Prostate gland (tissue), 2 donors: ENCODE measurements at regions of chr14 and their contacts with region 1.

Region 1: GRCh38 chr14:65095619-65096205 is 6.6 kb downstream of the MAX start:
- DNase-seq: peak; percentile 88
- H3K4me3 ChIP-seq: no peak overlapping the region
- H3K27ac ChIP-seq: peak overlapping the region; percentile 66 to 71
- H3K4me1 ChIP-seq: peaks cover 24% of the 10 kb centered on the region
- H3K27me3 ChIP-seq: no peaks in the 10 kb centered on the region
- CTCF ChIP-seq: no peak
- POLR2A ChIP-seq: no peak

Region 2: DNA sequence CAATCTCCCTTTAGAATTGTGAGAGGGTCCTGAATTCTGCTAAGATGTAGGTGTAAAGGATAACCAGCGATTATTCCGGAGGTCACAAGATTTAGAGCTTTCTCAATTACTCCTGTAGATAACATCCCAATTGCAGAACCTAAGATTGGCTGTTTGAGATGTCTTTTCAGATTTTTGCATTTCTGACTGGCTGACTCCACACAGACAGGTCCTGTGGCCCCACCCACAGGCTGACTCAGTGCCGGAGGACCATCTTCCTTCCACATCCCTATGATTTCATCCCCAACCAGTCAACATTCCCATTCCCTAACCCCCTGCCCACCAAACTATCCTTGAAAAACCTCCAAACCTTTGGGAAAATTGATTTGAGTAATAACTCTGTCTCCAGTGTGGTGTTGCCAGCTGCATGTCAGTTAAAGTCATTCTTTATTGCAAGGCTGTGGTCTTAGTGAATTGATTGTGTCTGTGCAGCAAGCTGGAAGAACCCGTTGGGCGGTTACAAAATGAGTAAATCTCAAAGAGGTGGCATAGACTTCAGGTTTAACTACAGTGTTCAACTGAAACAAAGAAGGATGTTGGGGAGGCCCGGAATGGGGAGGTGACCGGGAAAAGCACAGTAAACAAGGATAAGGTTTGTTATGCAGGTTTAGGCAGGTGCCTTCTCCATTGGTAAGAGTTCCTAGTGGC is 98.5 kb before region 1 on chr14:
- intact Hi-C with region 1: no loop called
- DNase-seq: peak; percentile 73
- H3K4me3 ChIP-seq: no peak overlapping the region
- H3K27ac ChIP-seq: peak overlapping the region; percentile 9 to 33
- H3K4me1 ChIP-seq: peaks cover 2% of the 10 kb centered on the region
- H3K27me3 ChIP-seq: no peaks in the 10 kb centered on the region
- CTCF ChIP-seq: no peak
- POLR2A ChIP-seq: no peak

Region 3: GRCh38 chr14:65080960-65081747 is 14.6 kb before region 1 on chr14:
- intact Hi-C with region 1: loop called (anchors 2 kb)
- DNase-seq: no peak
- H3K4me3 ChIP-seq: no peak overlapping the region
- H3K27ac ChIP-seq: peak overlapping the region; percentile 68 to 79
- H3K4me1 ChIP-seq: peaks cover 19% of the 10 kb centered on the region
- H3K27me3 ChIP-seq: no peaks in the 10 kb centered on the region
- CTCF ChIP-seq: no peak
- POLR2A ChIP-seq: no peak